Spleen (tissue), 13 donors: ENCODE measurements at regions of chr1 and their contacts with region 1.

Region 1: GRCh38 chr1:68120136-68120791 is 69.8 kb upstream of the DIRAS3 start:
- DNase-seq: no peak
- H3K4me3 ChIP-seq: no peak overlapping the region
- H3K27ac ChIP-seq: peak overlapping the region in 3 of 8 donors; percentile 14 to 45 (median 22)
- H3K4me1 ChIP-seq: peaks cover 0 to 21% (median 7%) of the 10 kb centered on the region in 6 donors
- H3K27me3 ChIP-seq: no peaks in the 10 kb centered on the region
- CTCF ChIP-seq: peak; percentile 50 to 83 (median 73)
- POLR2A ChIP-seq: no peak

Region 2: GRCh38 chr1:67760030-67760821 is 360.0 kb before region 1 on chr1:
- intact Hi-C with region 1: loop called (anchors 10 kb)
- DNase-seq: no peak
- H3K4me3 ChIP-seq: no peak overlapping the region
- H3K27ac ChIP-seq: peak overlapping the region in 3 of 8 donors; percentile 15 to 36 (median 22)
- H3K4me1 ChIP-seq: peaks cover 0 to 24% (median 15%) of the 10 kb centered on the region in 6 donors
- H3K27me3 ChIP-seq: peaks cover 0 to 14% (median 0%) of the 10 kb centered on the region in 7 donors
- CTCF ChIP-seq: peak; percentile 76 to 93 (median 86)
- POLR2A ChIP-seq: no peak

Region 3: GRCh38 chr1:67853704-67854103 is 266.6 kb before region 1 on chr1:
- intact Hi-C with region 1: loop called (anchors 10 kb)
- DNase-seq: no peak
- H3K4me3 ChIP-seq: no peak overlapping the region
- H3K27ac ChIP-seq: no peak overlapping the region
- H3K4me1 ChIP-seq: peaks cover 0 to 12% (median 6%) of the 10 kb centered on the region in 6 donors
- H3K27me3 ChIP-seq: peaks cover 0 to 11% (median 0%) of the 10 kb centered on the region in 7 donors
- CTCF ChIP-seq: peak in 9 of 11 experiments; percentile 13 to 72 (median 53)
- POLR2A ChIP-seq: no peak

Region 4: GRCh38 chr1:68339471-68339870 is 219.2 kb after region 1 on chr1:
- intact Hi-C with region 1: loop called (anchors 5 kb)
- DNase-seq: no peak
- H3K4me3 ChIP-seq: no peak overlapping the region
- H3K27ac ChIP-seq: peak overlapping the region in 3 of 8 donors; percentile 6 to 41 (median 24)
- H3K4me1 ChIP-seq: peaks cover 0 to 34% (median 13%) of the 10 kb centered on the region in 6 donors
- H3K27me3 ChIP-seq: no peaks in the 10 kb centered on the region
- CTCF ChIP-seq: no peak
- POLR2A ChIP-seq: no peak

Region 5: GRCh38 chr1:68442822-68443556 is 322.7 kb after region 1 on chr1:
- intact Hi-C with region 1: loop called (anchors 5 kb)
- DNase-seq: no peak
- H3K4me3 ChIP-seq: no peak overlapping the region
- H3K27ac ChIP-seq: no peak overlapping the region
- H3K4me1 ChIP-seq: peaks cover 0 to 1% (median 0%) of the 10 kb centered on the region in 6 donors
- H3K27me3 ChIP-seq: peaks cover 0 to 3% (median 0%) of the 10 kb centered on the region in 7 donors
- CTCF ChIP-seq: peak in 10 of 11 experiments; percentile 28 to 71 (median 58)
- POLR2A ChIP-seq: no peak

Region 6: GRCh38 chr1:69737527-69738185 is 1617.4 kb after region 1 on chr1:
- intact Hi-C with region 1: loop called (anchors 10 kb)
- DNase-seq: no peak
- H3K4me3 ChIP-seq: no peak overlapping the region
- H3K27ac ChIP-seq: no peak overlapping the region
- H3K4me1 ChIP-seq: no peaks in the 10 kb centered on the region
- H3K27me3 ChIP-seq: no peaks in the 10 kb centered on the region
- CTCF ChIP-seq: peak in 9 of 11 experiments; percentile 13 to 69 (median 52)
- POLR2A ChIP-seq: no peak